ENCODE measurements at regions of chr11 and their contacts with region 1.

Region 1: GRCh38 chr11:65700391-65700790 is 11.7 kb upstream of the KAT5 start:
- DNase-seq: no peak
- ATAC-seq: no peak
- H3K4me3 ChIP-seq: no peak overlapping the region
- H3K4me1 ChIP-seq: peaks cover 4% of the 10 kb centered on the region
- CTCF ChIP-seq: no peak

Region 2: GRCh38 chr11:65506770-65507505 is 193.5 kb before region 1 on chr11:
- intact Hi-C with region 1: no loop called
- DNase-seq: peak; percentile 61 to 68 (median 67)
- ATAC-seq: peak; percentile 35
- H3K4me3 ChIP-seq: no peak overlapping the region
- H3K4me1 ChIP-seq: peaks cover 26% of the 10 kb centered on the region
- CTCF ChIP-seq: no peak

Region 3: DNA sequence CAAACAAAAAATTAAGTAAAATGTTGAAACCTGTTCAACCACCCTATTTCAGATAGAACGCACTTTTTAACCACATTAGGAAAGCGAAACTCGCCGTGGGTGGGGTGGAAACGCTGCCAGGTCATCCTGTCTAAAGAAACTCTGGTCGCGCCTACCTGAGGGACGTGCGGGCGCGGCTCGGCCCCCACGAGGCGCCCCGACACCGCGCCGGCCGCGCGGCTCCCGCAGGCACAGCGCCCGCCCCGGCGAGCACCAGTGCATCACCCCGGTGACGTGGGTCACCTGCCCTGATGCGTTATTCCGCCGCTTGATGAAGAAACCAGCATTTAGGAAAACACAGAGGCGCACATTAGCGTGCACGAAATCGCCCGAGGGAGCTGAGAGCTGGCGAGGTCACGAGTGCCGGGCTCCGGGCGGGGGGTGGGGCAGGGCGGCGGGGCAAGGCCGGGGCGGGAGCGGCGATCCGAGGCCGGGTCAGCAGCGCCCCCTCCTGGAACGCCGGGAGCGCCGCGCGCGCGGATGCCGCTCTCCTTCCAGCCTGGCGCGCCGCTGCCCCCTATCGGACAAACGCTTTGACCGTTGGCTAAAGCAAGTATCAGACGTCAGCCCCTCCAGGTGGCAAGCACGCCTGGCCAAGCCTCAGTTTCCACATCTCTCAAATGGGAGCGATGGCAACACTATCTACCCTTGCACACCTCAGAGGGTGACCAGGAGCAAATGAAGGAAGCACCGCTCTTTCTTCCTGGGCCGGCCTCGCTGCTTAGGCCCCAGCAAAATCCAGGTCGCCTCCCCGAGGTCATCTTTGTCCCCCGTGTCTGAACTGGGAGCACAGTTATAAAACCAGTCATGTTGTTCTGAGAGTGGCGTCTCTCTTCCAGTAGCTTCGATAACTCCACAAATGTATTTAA is 117.7 kb after region 1 on chr11:
- intact Hi-C with region 1: loop called in 1 of 2 experiments (anchors 10 kb)
- DNase-seq: peak; percentile 95 to 99 (median 98)
- ATAC-seq: peak; percentile 91
- H3K4me3 ChIP-seq: peak overlapping the region; percentile 11
- H3K4me1 ChIP-seq: peaks cover 23% of the 10 kb centered on the region
- CTCF ChIP-seq: peak; percentile 99